WTC11 (cell line): ENCODE measurements at regions of chr11 and their contacts with region 1.

Region 1: DNA sequence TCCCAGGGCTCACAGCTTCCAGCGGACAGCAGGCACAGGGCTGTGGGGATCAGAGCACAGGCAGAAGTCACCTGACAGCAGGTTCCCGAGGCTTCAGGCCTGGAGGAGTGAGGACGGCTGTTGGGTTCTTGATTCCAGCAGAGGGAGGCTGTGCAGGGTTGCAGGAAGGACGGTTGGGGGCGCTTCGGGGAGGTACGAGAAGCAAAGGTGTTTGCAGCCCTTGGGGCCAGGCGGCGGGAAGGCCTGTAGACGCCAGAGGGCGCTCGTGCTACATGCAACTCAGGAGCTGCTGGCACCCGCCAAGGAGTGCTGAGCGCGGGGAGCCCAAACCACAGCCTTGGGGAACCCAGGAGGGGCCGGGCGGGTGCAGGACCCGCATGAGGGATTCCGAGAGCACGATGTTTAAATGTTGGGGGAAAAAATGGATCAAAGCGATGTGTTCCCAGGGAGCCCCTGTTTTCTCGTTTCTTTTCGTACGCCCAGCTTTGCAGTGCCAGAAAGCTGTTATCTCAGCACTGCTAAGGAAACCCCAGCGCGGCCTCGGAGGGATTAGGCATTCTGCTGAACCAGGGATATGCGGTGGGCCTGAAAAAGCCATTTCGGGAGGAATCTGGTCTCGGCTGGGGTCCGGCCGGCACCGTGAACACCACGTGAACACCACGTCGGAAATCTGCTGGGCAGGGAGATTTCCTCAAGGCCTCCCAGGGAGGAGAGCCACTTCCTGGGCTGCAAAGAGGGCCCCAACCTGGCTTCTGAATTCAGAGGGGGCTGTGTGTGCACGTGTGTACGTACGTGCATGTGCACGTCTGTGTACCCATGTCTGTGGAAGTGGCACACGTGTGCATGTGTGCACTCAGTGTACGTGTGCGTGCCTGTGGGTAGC is 88.1 kb downstream of the KCNQ1 start:
- DNase-seq: peak; percentile 99
- ATAC-seq: peak; percentile 89
- H3K4me3 Mint-ChIP-seq: no peak overlapping the region
- H3K27ac Mint-ChIP-seq: no peak overlapping the region
- H3K4me1 Mint-ChIP-seq: peaks cover 10% of the 10 kb centered on the region
- H3K27me3 Mint-ChIP-seq: peaks cover 45% of the 10 kb centered on the region
- CTCF ChIP-seq: peak; percentile 99

Region 2: DNA sequence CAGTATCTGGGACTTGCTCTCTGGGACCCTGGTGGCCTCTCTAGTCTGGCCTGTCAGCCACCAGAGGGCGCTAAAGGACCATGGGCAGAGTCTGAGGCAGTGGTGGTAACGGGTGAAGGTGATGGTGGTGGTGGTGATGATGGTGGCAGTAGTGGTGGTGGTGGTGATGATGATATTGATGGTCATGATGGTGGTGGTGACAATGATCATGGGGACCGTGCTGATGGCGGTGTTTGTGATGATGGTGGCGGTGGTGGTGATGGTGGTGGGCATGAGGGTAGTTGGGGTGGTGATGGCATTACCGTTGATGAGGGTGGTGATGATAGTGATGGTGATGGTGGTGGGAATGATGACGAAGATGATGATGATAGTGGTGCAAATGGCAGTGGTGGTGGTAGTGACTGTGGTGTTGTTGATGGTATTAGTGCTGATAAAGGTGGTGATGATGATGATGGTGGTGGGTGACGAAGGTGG is 104.6 kb before region 1 on chr11:
- CTCF ChIA-PET with region 1: interaction called, 122 read pairs
- POLR2A ChIA-PET with region 1: no interaction called
- DNase-seq: peak; percentile 88
- ATAC-seq: peak; percentile 89
- H3K4me3 Mint-ChIP-seq: no peak overlapping the region
- H3K27ac Mint-ChIP-seq: no peak overlapping the region
- H3K4me1 Mint-ChIP-seq: no peaks in the 10 kb centered on the region
- H3K27me3 Mint-ChIP-seq: peaks cover 10% of the 10 kb centered on the region
- CTCF ChIP-seq: peak; percentile 76

Region 3: DNA sequence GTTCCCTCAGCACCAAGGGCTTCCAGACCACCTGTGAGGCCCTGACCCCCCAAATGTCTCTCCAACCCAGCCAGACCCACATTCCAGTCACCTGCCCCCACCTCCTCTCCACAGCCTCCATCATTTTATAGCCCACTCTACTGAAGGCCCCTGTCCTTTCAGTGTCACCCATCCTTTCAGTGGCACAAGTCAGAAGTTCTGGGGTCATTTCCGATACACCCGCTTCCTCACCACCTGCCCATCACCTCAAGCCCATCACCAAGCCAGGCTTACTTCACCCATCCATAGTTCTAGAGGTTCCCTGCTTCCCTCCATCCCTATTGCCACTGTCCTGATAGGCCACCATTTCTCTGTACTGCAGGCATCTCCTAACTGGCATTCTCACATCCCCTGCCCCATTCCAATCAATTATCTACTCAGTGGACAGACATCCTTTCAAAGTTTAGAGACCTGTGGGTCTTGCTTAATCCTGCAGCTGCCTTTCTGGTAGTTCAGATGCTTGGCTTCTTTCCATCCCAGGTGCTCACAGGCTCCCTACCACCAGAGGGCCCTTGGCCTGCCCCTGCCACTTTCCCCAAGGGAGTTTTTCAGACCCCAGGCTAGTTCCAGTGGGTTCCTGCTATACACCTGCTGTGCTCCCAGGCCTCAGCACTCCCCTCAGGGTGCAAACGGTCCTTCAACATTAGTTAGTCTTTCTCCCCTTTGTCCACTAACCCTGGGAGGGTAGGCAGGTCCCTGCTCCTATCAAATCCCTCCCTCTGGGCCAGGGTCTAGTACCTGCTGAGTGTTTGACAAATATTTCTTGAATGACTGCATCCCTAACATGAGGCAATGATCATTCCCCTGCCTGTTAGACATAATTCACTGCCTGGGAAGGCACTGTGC is 159.3 kb after region 1 on chr11:
- CTCF ChIA-PET with region 1: interaction called, 23 read pairs
- POLR2A ChIA-PET with region 1: interaction called, 6 read pairs
- DNase-seq: peak; percentile 55
- ATAC-seq: no peak
- H3K4me3 Mint-ChIP-seq: peak overlapping the region; percentile 24
- H3K27ac Mint-ChIP-seq: peak overlapping the region; percentile 99
- H3K4me1 Mint-ChIP-seq: peaks cover 94% of the 10 kb centered on the region
- H3K27me3 Mint-ChIP-seq: peaks cover 6% of the 10 kb centered on the region; the same call in 1 of the 2 replicates
- CTCF ChIP-seq: peak; percentile 10; the same call in 1 of the 2 replicates

Region 4: GRCh38 chr11:2885676-2886081 is 352.7 kb after region 1 on chr11 and contains the start of gene CDKN1C:
- CTCF ChIA-PET with region 1: interaction called, 369 read pairs
- POLR2A ChIA-PET with region 1: interaction called, 4 read pairs
- DNase-seq: peak; percentile 83
- ATAC-seq: peak; percentile 53
- H3K4me3 Mint-ChIP-seq: peak within 1 kb of the TSS; percentile 81
- H3K27ac Mint-ChIP-seq: no peak within 1 kb of the TSS
- H3K4me1 Mint-ChIP-seq: peaks cover 26% of the 10 kb centered on the region
- H3K27me3 Mint-ChIP-seq: peaks cover 66% of the 10 kb centered on the region
- CTCF ChIP-seq: no peak
- total RNA-seq, gene CDKN1C: 25.0 to 35.0 TPM (median 32.4 TPM) in 3 replicates

Region 5: GRCh38 chr11:2892215-2893020 is 359.5 kb after region 1 on chr11:
- CTCF ChIA-PET with region 1: interaction called, 369 read pairs
- POLR2A ChIA-PET with region 1: interaction called, 13 read pairs
- DNase-seq: peak; percentile 84
- ATAC-seq: peak; percentile 67
- H3K4me3 Mint-ChIP-seq: peak overlapping the region; percentile 68
- H3K27ac Mint-ChIP-seq: 0 out of 2 replicates have a peak overlapping the region, but pooled peaks have one; percentile 23
- H3K4me1 Mint-ChIP-seq: peaks cover 11% of the 10 kb centered on the region
- H3K27me3 Mint-ChIP-seq: peaks cover 56% of the 10 kb centered on the region
- CTCF ChIP-seq: peak; percentile 93

Region 6: GRCh38 chr11:2901854-2902783 is 369.2 kb after region 1 on chr11:
- CTCF ChIA-PET with region 1: interaction called, 11 read pairs
- POLR2A ChIA-PET with region 1: no interaction called
- DNase-seq: peak; percentile 97
- ATAC-seq: peak; percentile 89
- H3K4me3 Mint-ChIP-seq: peak overlapping the region; percentile 66
- H3K27ac Mint-ChIP-seq: no peak overlapping the region
- H3K4me1 Mint-ChIP-seq: peaks cover 30% of the 10 kb centered on the region
- H3K27me3 Mint-ChIP-seq: peaks cover 59% of the 10 kb centered on the region
- CTCF ChIP-seq: no peak

Region 7: GRCh38 chr11:2930704-2931428 is 397.9 kb after region 1 on chr11:
- CTCF ChIA-PET with region 1: interaction called, 30 read pairs
- POLR2A ChIA-PET with region 1: no interaction called
- DNase-seq: peak; percentile 95
- ATAC-seq: peak; percentile 86
- H3K4me3 Mint-ChIP-seq: peak overlapping the region; percentile 72
- H3K27ac Mint-ChIP-seq: no peak overlapping the region
- H3K4me1 Mint-ChIP-seq: peaks cover 7% of the 10 kb centered on the region
- H3K27me3 Mint-ChIP-seq: peaks cover 42% of the 10 kb centered on the region
- CTCF ChIP-seq: peak; percentile 76